AG04449 (cell line): ENCODE measurements at regions of chr20 and their contacts with region 1.

Region 1: GRCh38 chr20:34834459-34834893 is 9.0 kb upstream of the NCOA6 start:
- DNase-seq: peak; percentile 0
- H3K4me3 ChIP-seq: no peak overlapping the region
- CTCF ChIP-seq: no peak

Region 2: DNA sequence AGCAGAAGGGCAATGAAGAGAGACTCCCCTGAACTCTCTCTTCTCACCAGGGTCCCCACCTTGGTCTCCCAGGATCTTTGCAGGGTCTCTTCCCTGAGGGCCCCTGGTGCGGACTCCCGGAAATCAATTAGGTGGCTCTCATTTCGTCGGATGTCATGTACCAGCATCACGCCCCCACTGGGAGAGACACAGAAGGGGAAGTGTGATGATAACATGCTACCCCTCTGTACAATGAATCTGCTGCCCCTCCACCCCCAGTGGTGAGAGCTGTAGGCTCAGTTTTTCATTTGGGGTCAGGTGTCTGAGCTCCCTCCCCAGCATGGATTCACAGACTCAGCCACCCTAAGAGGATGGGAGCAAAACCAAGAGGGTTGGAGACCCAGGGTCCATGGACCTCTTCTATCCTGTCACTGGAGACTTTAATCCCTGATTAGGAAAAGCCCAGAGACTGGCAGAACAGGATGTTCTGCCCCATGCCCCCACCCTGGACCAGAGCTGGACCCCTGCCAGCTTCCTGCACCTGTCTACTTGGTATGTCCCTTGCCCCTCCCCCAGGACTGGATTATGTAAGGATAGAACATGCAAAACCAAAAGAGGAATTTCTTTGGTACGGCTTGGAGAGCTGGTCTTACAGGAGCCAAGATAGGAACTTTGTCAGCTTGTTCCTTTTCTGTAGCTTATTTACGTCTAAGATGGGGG is 27.1 kb after region 1 on chr20:
- CTCF ChIA-PET with region 1: interaction called, 10 read pairs
- POLR2A ChIA-PET with region 1: no interaction called
- DNase-seq: no peak
- H3K4me3 ChIP-seq: no peak overlapping the region
- CTCF ChIP-seq: no peak